SK-N-SH (cell line): ENCODE measurements at regions of chr17 and their contacts with region 1.

Region 1: GRCh38 chr17:1783834-1784611 is 22.2 kb downstream of the SERPINF1 start:
- DNase-seq: peak; percentile 78
- H3K4me3 ChIP-seq: no peak overlapping the region; a peak in 1 of 4 replicates
- H3K27ac ChIP-seq: peak overlapping the region in 1 of 2 experiments; percentile 18; a peak in 2 of 4 replicates
- H3K4me1 ChIP-seq: peaks cover 14 to 26% of the 10 kb centered on the region in 2 experiments; a peak in 3 of 4 replicates
- H3K27me3 ChIP-seq: no peaks in the 10 kb centered on the region
- CTCF ChIP-seq: peak; percentile 77
- EP300 ChIP-seq: no peak
- RAD21 ChIP-seq: peak; percentile 85

Region 2: GRCh38 chr17:1617620-1618174 is 166.3 kb before region 1 on chr17:
- CTCF ChIA-PET with region 1: no interaction called
- POLR2A ChIA-PET with region 1: no interaction called
- DNase-seq: no peak
- H3K4me3 ChIP-seq: no peak overlapping the region
- H3K27ac ChIP-seq: no peak overlapping the region
- H3K4me1 ChIP-seq: no peaks in the 10 kb centered on the region; a peak in 1 of 4 replicates
- H3K27me3 ChIP-seq: no peaks in the 10 kb centered on the region
- CTCF ChIP-seq: no peak
- EP300 ChIP-seq: no peak
- RAD21 ChIP-seq: no peak

Region 3: GRCh38 chr17:1764284-1764683 is 19.7 kb before region 1 on chr17:
- CTCF ChIA-PET with region 1: interaction called, 12 read pairs
- POLR2A ChIA-PET with region 1: no interaction called
- DNase-seq: no peak
- H3K4me3 ChIP-seq: no peak overlapping the region
- H3K27ac ChIP-seq: peak overlapping the region; percentile 51 to 98; a peak in 3 of 4 replicates
- H3K4me1 ChIP-seq: peaks cover 28 to 34% of the 10 kb centered on the region in 2 experiments; a peak in 3 of 4 replicates
- H3K27me3 ChIP-seq: no peaks in the 10 kb centered on the region
- CTCF ChIP-seq: no peak
- EP300 ChIP-seq: no peak
- RAD21 ChIP-seq: no peak